SK-MEL-5 (cell line): ENCODE measurements at regions of chr18 and their contacts with region 1.

Region 1: GRCh38 chr18:839224-840022 is 27.4 kb upstream of the YES1 start:
- DNase-seq: peak; percentile 82

Region 2: DNA sequence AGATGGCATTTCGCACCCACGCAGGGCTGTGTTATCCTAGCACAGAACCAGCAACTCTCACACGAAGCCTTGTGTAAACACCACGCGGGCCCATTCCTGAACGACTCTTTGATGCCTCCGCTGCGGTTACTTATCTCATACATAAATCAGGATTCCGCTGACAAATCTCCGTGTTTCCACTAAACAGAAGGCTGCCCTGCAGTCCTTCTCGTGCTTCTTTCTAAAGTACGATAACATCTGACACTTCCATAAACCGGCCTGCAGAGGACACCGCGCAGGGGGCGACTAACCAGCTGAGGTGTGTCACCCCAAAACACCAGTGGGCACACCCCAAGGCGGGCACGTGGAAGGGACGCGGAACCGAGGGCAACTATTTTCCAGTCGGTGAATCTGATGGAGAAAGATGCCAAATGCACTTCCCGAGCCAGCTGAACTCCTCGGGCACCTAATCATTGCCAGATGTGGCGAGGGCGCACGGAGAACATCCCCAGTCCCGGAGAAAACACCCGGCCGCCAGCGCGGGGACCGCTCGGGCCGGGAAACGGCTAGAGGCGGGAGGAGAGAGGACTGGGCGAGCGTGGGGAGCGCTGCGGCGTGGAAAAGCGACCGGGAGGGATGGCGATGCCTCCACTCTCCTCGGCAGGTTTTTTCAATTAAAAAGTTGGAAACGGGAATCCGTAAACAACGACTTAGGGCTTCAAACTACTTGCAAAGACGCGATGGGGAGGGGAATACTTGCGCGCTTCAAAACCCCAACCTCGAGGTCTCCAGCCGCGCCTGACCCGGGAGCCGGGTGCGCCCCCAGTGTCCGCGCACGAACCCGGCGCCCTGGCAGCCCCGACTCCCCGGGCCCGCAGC is 339.6 kb before region 1 on chr18:
- in situ Hi-C with region 1: no loop called
- DNase-seq: no peak

Region 3: DNA sequence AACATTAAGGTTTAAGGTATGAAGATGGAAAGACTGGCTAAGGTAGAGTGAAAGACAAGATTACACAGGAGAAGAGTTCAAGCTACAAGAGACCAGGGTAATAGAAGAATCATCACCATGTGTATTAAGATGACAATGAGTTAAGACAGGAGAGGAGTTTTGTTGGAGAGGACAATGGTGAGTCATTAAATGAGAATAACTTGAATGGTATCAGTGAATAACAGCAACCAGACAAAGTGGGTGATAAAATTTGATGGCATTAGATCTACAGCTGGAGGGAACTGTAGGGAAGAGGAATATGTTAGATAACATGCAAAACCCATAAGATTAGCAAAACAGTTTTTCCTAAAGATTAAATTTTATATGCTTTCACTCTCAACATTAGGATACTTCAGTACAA is 108.2 kb before region 1 on chr18:
- in situ Hi-C with region 1: loop called (anchors 10 kb)
- DNase-seq: no peak

Region 4: GRCh38 chr18:1177232-1177631 is 337.8 kb after region 1 on chr18:
- in situ Hi-C with region 1: no loop called
- DNase-seq: no peak